ENCODE measurements at regions of chr3 and their contacts with region 1.

Region 1: DNA sequence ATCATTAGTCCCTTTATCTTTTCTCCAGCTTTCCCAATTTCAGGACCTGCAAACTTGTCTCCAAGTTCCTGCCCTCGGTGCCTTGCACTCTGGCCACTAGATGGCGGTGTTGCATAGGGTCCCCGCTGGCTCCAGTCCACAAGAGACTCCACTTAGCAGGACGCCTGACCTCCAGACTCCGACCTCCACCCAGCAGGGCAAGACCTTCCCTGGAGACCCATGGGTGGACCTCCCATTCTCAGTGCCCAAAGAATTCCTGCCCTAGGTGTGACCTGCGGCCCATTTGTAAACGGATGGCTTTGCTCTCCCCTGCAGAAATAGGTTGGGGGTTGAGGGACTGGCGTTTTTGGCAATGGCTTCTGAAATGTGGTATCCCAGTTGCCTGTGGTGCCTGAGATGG is 82.6 kb downstream of the LSM3 start:
- DNase-seq: peak; percentile 86
- ATAC-seq: peak; percentile 88 to 91
- H3K4me3 ChIP-seq: no peak overlapping the region
- H3K27ac ChIP-seq: no peak overlapping the region
- H3K4me1 ChIP-seq: peaks cover 5% of the 10 kb centered on the region
- H3K27me3 ChIP-seq: peaks cover 5% of the 10 kb centered on the region
- CTCF ChIP-seq: peak; percentile 99

Region 2: DNA sequence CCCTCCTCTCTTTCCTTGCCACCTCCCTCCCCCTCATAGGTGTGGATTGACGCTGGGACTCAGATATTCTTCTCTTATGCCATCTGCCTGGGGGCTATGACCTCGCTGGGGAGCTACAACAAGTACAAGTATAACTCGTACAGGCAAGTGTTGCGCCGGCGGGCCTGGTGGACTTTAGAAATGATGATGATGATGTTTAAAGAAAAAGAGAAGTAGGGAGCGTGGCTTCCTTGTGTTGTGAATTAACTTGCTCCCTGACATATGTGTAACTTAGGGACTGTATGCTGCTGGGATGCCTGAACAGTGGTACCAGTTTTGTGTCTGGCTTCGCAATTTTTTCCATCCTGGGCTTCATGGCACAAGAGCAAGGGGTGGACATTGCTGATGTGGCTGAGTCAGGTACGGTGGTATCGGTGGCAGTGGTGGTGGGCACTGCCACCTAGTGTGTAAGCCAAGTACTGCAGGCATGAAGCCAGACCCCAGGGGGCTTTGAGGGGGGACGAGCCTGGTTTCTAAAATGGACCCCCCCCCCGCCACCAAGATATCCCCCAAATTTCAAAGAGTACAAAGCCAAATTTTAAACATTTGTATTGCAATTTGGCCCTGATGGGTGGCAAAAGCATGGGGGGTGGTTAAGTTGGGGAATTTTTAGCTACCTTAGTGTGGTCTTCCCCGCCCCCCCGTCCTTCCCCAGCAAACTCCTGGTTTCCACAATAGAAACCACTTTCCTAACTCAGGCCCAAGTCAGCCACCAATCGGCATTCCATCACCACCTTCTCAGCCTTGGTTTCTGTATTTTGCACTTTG is 206.8 kb after region 1 on chr3:
- intact Hi-C with region 1: loop called (anchors 5 kb)
- DNase-seq: no peak
- ATAC-seq: peak; percentile 49 to 50
- H3K4me3 ChIP-seq: no peak overlapping the region
- H3K27ac ChIP-seq: no peak overlapping the region
- H3K4me1 ChIP-seq: peaks cover 10% of the 10 kb centered on the region
- H3K27me3 ChIP-seq: no peaks in the 10 kb centered on the region
- CTCF ChIP-seq: peak; percentile 83